Left ventricle myocardium superior (tissue), 1 donor: ENCODE measurements at regions of chr19 and their contacts with region 1.

Region 1: GRCh38 chr19:38335949-38336637 is 463 bp downstream of the CATSPERG start:
- DNase-seq: peak; percentile 96
- ATAC-seq: peak; percentile 93

Region 2: DNA sequence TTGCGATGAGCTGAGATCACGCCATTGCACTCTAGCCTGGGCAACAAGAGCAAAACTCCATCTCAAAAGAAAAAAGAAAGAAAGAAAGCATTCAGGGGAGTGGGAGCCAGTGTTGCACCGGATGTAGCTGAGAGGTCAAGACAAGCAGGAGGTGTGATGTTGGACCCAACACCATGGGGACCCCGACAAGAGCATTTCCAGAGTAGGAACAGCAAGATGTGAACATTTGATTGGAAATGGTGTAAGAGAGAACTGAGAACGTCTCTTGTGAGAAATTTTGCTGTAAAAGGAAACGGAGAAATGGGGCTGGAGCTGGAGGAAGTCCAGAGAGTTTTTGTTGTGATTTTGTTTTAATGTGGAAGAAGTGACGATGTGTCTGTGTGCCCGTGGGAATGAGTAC is 96.3 kb before region 1 on chr19:
- intact Hi-C with region 1: loop called (anchors 2 kb)
- DNase-seq: no peak
- ATAC-seq: no peak

Region 3: DNA sequence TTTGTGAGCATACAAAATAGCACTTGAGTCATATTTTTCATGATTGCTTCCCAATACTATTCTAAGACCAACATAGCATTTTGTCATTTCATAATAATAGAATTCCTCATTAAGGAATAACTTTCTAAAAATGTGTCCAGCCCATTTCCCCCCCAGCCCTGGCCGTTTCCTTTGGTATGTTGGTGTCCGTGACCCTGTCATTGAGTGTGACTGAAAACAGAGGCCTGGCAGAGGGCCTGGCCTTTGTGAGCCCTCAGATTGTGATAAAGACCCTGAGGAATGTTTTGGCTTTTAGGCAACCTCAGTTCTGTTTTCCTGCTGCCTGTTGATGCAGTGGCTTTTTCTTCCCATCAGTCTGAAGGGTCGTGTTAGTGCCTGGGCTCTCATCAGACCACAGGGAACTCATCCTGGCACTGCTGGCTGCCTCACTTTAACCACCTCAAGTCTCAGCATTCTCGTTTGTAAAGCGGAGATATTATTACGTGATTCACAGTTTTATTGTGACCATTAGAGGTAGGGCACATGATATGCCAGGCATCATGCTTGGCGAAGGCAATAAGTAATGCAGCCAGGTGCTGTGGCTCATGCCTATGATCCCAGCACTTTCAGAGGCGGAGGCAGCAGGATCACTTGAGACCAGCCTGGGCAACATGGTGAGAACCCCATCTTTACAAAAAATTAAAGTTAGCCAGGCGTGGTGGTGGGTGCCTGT is 58.0 kb before region 1 on chr19:
- intact Hi-C with region 1: no loop called
- DNase-seq: peak; percentile 76
- ATAC-seq: peak; percentile 89